Activated CD4-positive, alpha-beta memory T cell treated with anti-CD3 and anti-CD28 coated beads for 36 hours (primary cell): ENCODE measurements at regions of chr14 and their contacts with region 1.

Region 1: DNA sequence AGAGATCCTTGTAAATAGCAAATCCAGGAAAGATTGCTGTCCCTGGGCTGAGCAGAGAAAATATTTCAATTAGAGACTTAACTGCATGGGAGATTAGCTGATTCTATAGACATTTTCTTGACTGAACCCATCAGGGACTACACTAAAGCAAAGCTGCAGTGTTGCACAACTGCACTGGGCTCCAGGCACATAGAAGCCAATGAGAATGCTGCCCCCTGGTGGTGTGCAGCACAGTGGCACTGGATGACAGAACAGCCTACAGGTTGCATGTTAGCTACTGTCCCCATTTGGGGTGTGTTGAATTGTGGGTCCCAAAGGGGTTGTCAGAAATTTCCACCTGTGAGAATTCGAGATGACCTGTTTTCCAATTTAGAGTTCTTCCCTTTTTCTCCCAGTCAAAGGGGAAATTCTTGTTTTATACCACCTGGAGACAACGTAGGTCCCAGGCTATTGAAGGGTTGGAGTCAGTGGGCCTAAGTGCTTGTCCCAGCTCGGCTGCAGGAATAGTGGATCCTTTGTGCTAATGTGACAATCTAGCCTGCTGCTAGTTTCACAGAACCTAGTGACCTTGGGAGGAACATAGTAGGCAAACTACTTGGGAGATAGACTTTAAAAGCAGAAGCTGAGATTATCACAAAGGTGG is 114.7 kb downstream of the SLC8A3 start:
- DNase-seq: peak; percentile 71
- H3K4me3 Mint-ChIP-seq: no peak overlapping the region
- H3K27ac Mint-ChIP-seq: no peak overlapping the region
- H3K4me1 Mint-ChIP-seq: no peaks in the 10 kb centered on the region
- H3K27me3 Mint-ChIP-seq: peaks cover 9% of the 10 kb centered on the region

Region 2: GRCh38 chr14:69818757-69819191 is 255.3 kb before region 1 on chr14:
- CTCF ChIA-PET with region 1: interaction called, 52 read pairs
- POLR2A ChIA-PET with region 1: no interaction called
- intact Hi-C with region 1: loop called (anchors 1 kb)
- DNase-seq: peak; percentile 54
- H3K4me3 Mint-ChIP-seq: no peak overlapping the region
- H3K27ac Mint-ChIP-seq: no peak overlapping the region
- H3K4me1 Mint-ChIP-seq: peaks cover 4% of the 10 kb centered on the region
- H3K27me3 Mint-ChIP-seq: peaks cover 3% of the 10 kb centered on the region

Region 3: DNA sequence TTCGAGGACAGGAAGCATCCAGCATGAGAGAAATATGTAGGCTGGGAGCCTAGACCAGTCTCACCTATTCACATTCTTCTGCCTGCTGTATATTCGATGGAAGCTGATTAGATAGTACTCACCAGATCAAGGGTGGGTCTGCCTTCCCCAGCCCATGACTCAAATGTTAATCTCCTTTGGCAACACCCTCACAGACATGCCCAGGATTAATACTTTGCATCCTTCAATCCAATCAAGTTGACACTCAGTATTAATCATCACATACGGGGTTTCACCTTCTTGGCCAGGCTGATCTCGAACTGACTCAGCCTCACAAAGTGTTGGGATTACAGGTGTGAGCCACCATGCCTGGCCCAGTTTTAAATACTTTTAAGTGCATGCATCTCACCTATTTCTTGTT is 246.5 kb before region 1 on chr14:
- CTCF ChIA-PET with region 1: interaction called, 13 read pairs
- POLR2A ChIA-PET with region 1: no interaction called
- intact Hi-C with region 1: no loop called
- DNase-seq: peak; percentile 48
- H3K4me3 Mint-ChIP-seq: no peak overlapping the region
- H3K27ac Mint-ChIP-seq: no peak overlapping the region
- H3K4me1 Mint-ChIP-seq: peaks cover 3% of the 10 kb centered on the region
- H3K27me3 Mint-ChIP-seq: no peaks in the 10 kb centered on the region

Region 4: DNA sequence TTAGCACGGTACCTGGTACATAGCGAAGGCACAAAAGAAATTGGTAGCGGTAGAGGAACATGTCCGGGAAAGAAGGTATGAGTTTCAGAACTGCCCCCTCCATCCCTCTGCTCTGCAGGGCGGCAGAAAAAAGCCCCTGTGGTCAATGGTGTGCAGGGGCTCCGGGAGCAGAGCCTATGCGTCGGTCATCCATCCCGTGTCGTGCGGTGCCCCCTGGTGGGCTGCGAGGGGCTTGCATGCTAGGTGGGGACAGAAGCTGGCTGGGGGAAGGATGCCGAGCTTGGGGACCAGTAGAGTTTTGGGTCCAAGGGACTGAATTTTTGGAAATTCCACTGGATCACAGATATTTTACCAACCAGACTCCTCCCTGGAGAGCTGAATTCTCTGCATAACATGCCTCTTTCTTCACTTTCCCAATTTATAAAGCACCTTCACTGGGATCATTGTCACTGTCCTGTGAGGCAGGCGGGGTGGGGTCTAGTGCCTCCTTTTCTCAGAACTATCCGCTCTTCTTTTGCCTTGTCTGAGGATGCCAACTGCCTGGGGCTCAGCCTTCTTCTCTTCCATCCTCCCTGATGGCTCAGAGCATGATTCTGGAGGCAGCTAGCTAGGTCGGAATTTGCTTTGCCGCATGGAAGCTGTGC is 46.1 kb before region 1 on chr14:
- CTCF ChIA-PET with region 1: interaction called, 16 read pairs
- POLR2A ChIA-PET with region 1: no interaction called
- intact Hi-C with region 1: no loop called
- DNase-seq: peak; percentile 77
- H3K4me3 Mint-ChIP-seq: no peak overlapping the region
- H3K27ac Mint-ChIP-seq: no peak overlapping the region
- H3K4me1 Mint-ChIP-seq: no peaks in the 10 kb centered on the region
- H3K27me3 Mint-ChIP-seq: no peaks in the 10 kb centered on the region

Region 5: GRCh38 chr14:70057519-70058136 is 16.4 kb before region 1 on chr14:
- CTCF ChIA-PET with region 1: interaction called, 10 read pairs
- POLR2A ChIA-PET with region 1: no interaction called
- intact Hi-C with region 1: no loop called
- DNase-seq: no peak
- H3K4me3 Mint-ChIP-seq: no peak overlapping the region
- H3K27ac Mint-ChIP-seq: no peak overlapping the region
- H3K4me1 Mint-ChIP-seq: no peaks in the 10 kb centered on the region
- H3K27me3 Mint-ChIP-seq: peaks cover 16% of the 10 kb centered on the region

Region 6: DNA sequence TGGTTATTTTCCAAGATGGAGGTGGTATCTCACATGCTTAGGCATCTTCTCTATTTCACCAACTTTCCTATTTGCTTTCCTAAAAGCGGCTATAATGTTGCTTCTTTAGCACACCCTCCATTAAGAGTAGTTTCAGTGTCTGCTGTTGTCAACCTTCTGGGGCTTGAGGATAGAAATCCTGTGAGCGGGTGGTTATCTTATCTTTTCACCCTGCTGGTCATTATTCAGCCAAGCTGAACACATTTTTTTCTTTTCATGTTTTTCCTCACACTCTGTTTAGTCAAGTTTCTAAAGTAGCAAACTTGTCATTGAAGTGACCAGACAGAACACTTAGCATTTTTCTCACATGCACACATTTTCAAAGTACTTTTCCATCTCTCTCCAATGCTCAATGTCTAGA is 10.2 kb after region 1 on chr14:
- CTCF ChIA-PET with region 1: interaction called, 15 read pairs
- POLR2A ChIA-PET with region 1: no interaction called
- intact Hi-C with region 1: no loop called
- DNase-seq: no peak
- H3K4me3 Mint-ChIP-seq: no peak overlapping the region
- H3K27ac Mint-ChIP-seq: no peak overlapping the region
- H3K4me1 Mint-ChIP-seq: no peaks in the 10 kb centered on the region
- H3K27me3 Mint-ChIP-seq: peaks cover 16% of the 10 kb centered on the region